Thyroid gland (tissue), 4 donors: ENCODE measurements at regions of chr14 and their contacts with region 1.

Region 1: GRCh38 chr14:61252369-61253063 is 28.6 kb downstream of the TMEM30B start:
- DNase-seq: peak; percentile 80 to 83
- H3K4me3 ChIP-seq: no peak overlapping the region
- H3K27ac ChIP-seq: no peak overlapping the region
- H3K4me1 ChIP-seq: no peaks in the 10 kb centered on the region
- H3K27me3 ChIP-seq: no peaks in the 10 kb centered on the region
- CTCF ChIP-seq: peak; percentile 46 to 92 (median 86)
- POLR2A ChIP-seq: no peak

Region 2: DNA sequence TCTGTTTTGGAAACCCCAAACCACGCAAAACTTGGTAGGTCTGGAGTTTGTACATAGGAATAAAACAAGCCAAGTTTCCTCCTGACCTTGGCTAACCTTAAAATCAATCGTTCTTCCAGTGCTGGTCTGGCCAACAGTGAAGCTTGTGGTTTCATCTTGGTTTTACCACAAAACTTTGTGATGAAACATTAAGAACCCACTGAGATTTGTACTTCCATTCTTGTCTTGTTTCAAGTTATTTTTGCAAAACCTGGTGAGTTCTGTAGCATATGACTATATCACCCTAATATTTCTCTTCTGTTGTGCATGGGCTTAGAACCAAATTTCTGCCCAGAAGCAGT is 629.6 kb before region 1 on chr14:
- intact Hi-C with region 1: loop called (anchors 5 kb)
- DNase-seq: no peak
- H3K4me3 ChIP-seq: no peak overlapping the region
- H3K27ac ChIP-seq: no peak overlapping the region
- H3K4me1 ChIP-seq: peaks cover 0 to 21% of the 10 kb centered on the region in 2 donors
- H3K27me3 ChIP-seq: no peaks in the 10 kb centered on the region
- CTCF ChIP-seq: no peak
- POLR2A ChIP-seq: no peak

Region 3: GRCh38 chr14:61553725-61554641 is 301.5 kb after region 1 on chr14:
- intact Hi-C with region 1: no loop called
- DNase-seq: no peak
- H3K4me3 ChIP-seq: no peak overlapping the region
- H3K27ac ChIP-seq: peak overlapping the region in 1 of 3 donors; percentile 52
- H3K4me1 ChIP-seq: peaks cover 9 to 38% of the 10 kb centered on the region in 2 donors
- H3K27me3 ChIP-seq: no peaks in the 10 kb centered on the region
- CTCF ChIP-seq: no peak
- POLR2A ChIP-seq: no peak